Heart right ventricle (tissue), 16 donors: ENCODE measurements at regions of chr17 and their contacts with region 1.

Region 1: GRCh38 chr17:74424657-74425056 is 7.2 kb upstream of the GPRC5C start:
- DNase-seq: peak; percentile 51 to 70
- ATAC-seq: peak; percentile 72 to 91 (median 86)
- H3K4me3 ChIP-seq: peak overlapping the region in 7 of 10 donors; percentile 10 to 32 (median 24)
- H3K27ac ChIP-seq: peak overlapping the region in 9 of 10 donors; percentile 53 to 83 (median 69)
- H3K4me1 ChIP-seq: peaks cover 6 to 42% (median 20%) of the 10 kb centered on the region in 9 donors
- H3K27me3 ChIP-seq: peaks cover 0 to 13% (median 0%) of the 10 kb centered on the region in 7 donors
- CTCF ChIP-seq: no peak

Region 2: DNA sequence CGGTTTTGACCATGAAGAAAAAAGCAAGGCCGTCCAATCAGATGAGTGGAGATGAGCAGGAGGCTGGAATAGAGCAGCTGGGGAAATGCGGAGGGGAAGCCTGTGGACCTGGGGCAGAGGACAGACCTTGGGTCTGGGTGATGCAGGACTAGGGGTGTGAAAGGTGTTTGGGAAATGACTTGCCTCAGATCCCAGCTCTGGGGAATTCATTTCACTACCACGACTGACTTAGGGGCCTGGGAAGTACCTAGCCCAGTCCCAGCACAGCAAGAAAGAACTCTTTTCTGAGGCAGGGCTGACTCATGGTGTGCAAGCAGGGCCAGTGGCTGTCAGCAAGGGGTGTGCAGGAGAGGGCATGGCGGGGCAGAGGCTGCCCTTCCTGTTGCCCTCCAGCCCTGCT is 135.9 kb before region 1 on chr17:
- intact Hi-C with region 1: no loop called
- DNase-seq: no peak
- ATAC-seq: peak in 1 of 8 donors; percentile 11
- H3K4me3 ChIP-seq: no peak overlapping the region
- H3K27ac ChIP-seq: peak overlapping the region in 1 of 10 donors; percentile 22
- H3K4me1 ChIP-seq: peaks cover 0 to 19% (median 7%) of the 10 kb centered on the region in 9 donors
- H3K27me3 ChIP-seq: no peaks in the 10 kb centered on the region
- CTCF ChIP-seq: no peak

Region 3: GRCh38 chr17:74325743-74326379 is 98.8 kb before region 1 on chr17 and contains the start of gene KIF19:
- intact Hi-C with region 1: no loop called
- DNase-seq: peak; percentile 33 to 65
- ATAC-seq: peak; percentile 74 to 89 (median 80)
- H3K4me3 ChIP-seq: peak within 1 kb of the TSS; percentile 33 to 61 (median 48)
- H3K27ac ChIP-seq: peak within 1 kb of the TSS in 9 of 10 donors; percentile 9 to 62 (median 46)
- H3K4me1 ChIP-seq: peaks cover 10 to 22% (median 18%) of the 10 kb centered on the region in 9 donors
- H3K27me3 ChIP-seq: peaks cover 0 to 26% (median 0%) of the 10 kb centered on the region in 7 donors
- CTCF ChIP-seq: no peak
- total RNA-seq, gene KIF19: 0.07 to 1.5 (median 0.26) TPM

Region 4: DNA sequence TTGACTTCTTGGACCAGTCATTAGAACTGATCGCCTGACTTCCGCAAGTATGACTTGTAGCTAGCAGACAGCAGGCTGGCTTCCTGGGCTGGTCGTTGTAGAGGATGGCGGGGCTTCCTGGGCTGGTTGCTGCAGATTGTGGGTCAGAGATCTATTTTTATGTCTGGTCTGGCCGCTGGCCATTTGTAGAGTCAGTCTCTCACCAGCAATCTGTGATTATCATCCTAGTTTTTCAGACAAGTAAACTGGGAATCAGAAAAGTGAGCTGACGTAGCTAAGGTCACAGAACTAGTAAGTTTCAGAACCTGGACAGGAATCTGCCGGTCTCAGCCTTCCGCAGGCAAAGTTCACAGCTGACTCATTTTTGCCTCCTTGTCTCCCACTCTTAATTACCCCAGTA is 38.3 kb before region 1 on chr17:
- intact Hi-C with region 1: loop called in 3 of 10 experiments (anchors 5 kb)
- DNase-seq: peak; percentile 63 to 81
- ATAC-seq: peak; percentile 77 to 93 (median 88)
- H3K4me3 ChIP-seq: no peak overlapping the region
- H3K27ac ChIP-seq: peak overlapping the region in 9 of 10 donors; percentile 56 to 81 (median 68)
- H3K4me1 ChIP-seq: peaks cover 6 to 26% (median 14%) of the 10 kb centered on the region in 9 donors
- H3K27me3 ChIP-seq: no peaks in the 10 kb centered on the region
- CTCF ChIP-seq: no peak